Naive thymus-derived CD4-positive, alpha-beta T cell (primary cell): ENCODE measurements at regions of chr15 and their contacts with region 1.

Region 1: GRCh38 chr15:52568601-52569256 is at the start of gene ARPP19:
- DNase-seq: peak; percentile 58 to 81 (median 76)
- ATAC-seq: peak; percentile 83
- H3K4me3 ChIP-seq: peak within 1 kb of the TSS; percentile 75
- H3K4me3 Mint-ChIP-seq: peak within 1 kb of the TSS; percentile 89 to 100 (median 96)
- H3K27ac ChIP-seq: peak within 1 kb of the TSS; percentile 98
- H3K27ac Mint-ChIP-seq: peak within 1 kb of the TSS; percentile 95 to 100 (median 100)
- H3K4me1 ChIP-seq: peaks cover 13 to 25% of the 10 kb centered on the region in 2 donors
- H3K4me1 Mint-ChIP-seq: peaks cover 28 to 46% (median 42%) of the 10 kb centered on the region in 7 donors
- H3K27me3 ChIP-seq: no peaks in the 10 kb centered on the region
- H3K27me3 Mint-ChIP-seq: peaks cover 0 to 3% (median 0%) of the 10 kb centered on the region in 5 donors
- total RNA-seq, gene ARPP19: 94.9 to 148 (median 122) TPM

Region 2: GRCh38 chr15:52256366-52256765 is 312.4 kb before region 1 on chr15:
- CTCF ChIA-PET with region 1: no interaction called
- POLR2A ChIA-PET with region 1: no interaction called
- intact Hi-C with region 1: loop called (anchors 1 to 2 kb)
- DNase-seq: peak; percentile 27 to 80 (median 75)
- ATAC-seq: peak; percentile 98
- H3K4me3 ChIP-seq: peak overlapping the region; percentile 14
- H3K4me3 Mint-ChIP-seq: peak overlapping the region; percentile 49 to 85 (median 72)
- H3K27ac ChIP-seq: no peak overlapping the region
- H3K27ac Mint-ChIP-seq: peak overlapping the region; percentile 4 to 96 (median 65)
- H3K4me1 ChIP-seq: peaks cover 0 to 12% of the 10 kb centered on the region in 2 donors
- H3K4me1 Mint-ChIP-seq: peaks cover 5 to 55% (median 17%) of the 10 kb centered on the region in 7 donors
- H3K27me3 ChIP-seq: no peaks in the 10 kb centered on the region
- H3K27me3 Mint-ChIP-seq: no peaks in the 10 kb centered on the region

Region 3: DNA sequence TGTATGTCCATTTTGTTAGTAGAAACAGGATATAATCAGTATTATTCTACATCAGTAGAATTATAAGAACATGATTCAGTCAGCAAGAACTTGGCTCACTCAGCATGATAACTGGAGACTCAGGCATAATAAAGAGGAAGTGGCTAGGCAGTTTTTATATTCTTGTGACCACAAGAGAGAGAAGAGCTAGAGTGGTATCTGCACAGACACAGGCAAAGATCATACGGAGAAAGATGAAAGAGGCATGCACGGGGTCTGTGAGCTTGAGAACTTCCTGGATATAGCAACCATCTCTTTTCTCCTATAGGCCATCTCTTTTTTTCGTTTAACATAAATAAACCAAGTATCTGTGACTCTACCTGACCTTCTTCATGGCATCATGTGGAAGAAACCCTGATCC is 86.8 kb before region 1 on chr15:
- CTCF ChIA-PET with region 1: no interaction called
- POLR2A ChIA-PET with region 1: no interaction called
- intact Hi-C with region 1: loop called in 1 of 2 experiments (anchors 5 kb)
- DNase-seq: peak in 7 of 9 donors; percentile 75 to 91 (median 87)
- ATAC-seq: peak; percentile 99
- H3K4me3 ChIP-seq: peak overlapping the region; percentile 36
- H3K4me3 Mint-ChIP-seq: peak overlapping the region; percentile 8 to 78 (median 58)
- H3K27ac ChIP-seq: no peak overlapping the region
- H3K27ac Mint-ChIP-seq: peak overlapping the region; percentile 15 to 88 (median 53)
- H3K4me1 ChIP-seq: peaks cover 30 to 43% of the 10 kb centered on the region in 2 donors
- H3K4me1 Mint-ChIP-seq: peaks cover 56 to 71% (median 59%) of the 10 kb centered on the region in 7 donors
- H3K27me3 ChIP-seq: no peaks in the 10 kb centered on the region
- H3K27me3 Mint-ChIP-seq: no peaks in the 10 kb centered on the region

Region 4: DNA sequence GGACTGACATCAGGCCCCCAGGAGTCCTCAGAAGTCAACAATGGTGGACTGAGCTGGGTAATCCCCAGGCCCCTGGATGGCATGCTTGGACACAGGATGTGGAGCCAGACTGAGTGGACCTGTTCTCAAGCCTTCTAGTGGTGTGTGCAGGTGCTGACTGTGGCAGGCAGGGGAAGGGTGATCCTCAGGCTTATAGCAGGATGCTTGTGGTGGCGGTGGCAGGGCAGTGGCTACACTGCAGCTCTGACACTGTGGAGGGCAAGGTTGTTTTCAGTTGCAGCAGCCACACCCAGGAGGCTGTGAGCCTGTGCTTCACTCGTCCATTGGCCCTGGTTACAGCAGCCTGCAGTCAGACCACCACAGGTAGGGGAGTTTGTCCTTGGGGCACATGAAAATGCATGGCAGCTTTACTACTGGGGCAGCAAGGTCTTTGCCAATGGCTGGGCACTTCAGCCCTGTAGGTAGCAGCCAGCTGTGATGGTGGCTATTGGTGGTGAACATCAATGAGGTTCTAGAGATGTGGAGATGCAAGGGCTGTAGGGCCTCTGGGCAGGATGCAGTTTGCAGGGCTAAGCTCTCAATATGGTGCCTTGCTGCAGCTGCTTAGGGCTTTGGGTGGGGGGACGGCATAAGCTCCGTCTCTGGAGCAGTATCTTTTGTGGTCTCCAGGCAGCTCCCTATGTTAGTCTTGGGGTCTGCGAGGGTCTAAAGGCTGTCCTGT is 22.5 kb before region 1 on chr15:
- CTCF ChIA-PET with region 1: no interaction called
- POLR2A ChIA-PET with region 1: no interaction called
- intact Hi-C with region 1: no loop called
- DNase-seq: no peak
- ATAC-seq: peak; percentile 72
- H3K4me3 ChIP-seq: no peak overlapping the region
- H3K4me3 Mint-ChIP-seq: peak overlapping the region in 1 of 10 donors; percentile 28
- H3K27ac ChIP-seq: no peak overlapping the region
- H3K27ac Mint-ChIP-seq: peak overlapping the region in 3 of 9 donors; percentile 17 to 62 (median 38)
- H3K4me1 ChIP-seq: peaks cover 0 to 5% of the 10 kb centered on the region in 2 donors
- H3K4me1 Mint-ChIP-seq: peaks cover 0 to 14% (median 0%) of the 10 kb centered on the region in 7 donors
- H3K27me3 ChIP-seq: no peaks in the 10 kb centered on the region
- H3K27me3 Mint-ChIP-seq: peaks cover 0 to 6% (median 0%) of the 10 kb centered on the region in 5 donors

Region 5: DNA sequence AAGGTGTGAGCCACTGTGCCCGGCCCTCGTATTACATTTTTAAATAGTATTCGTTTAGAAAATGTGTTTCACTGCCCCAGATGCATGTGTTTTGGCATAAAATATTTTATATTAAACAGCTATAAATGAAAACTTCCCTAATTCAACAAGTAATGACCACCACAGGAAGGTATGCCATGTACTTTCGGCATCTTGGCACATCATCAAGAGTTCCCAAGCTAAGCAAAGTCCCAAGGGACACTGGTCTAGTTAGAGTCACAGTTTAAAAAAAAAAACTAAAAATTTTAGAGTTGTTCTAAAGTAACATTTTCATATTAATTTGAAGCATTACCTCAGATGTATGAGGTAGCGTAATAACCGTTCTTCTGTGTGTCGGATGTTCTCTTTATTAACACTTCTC is 15.7 kb after region 1 on chr15:
- CTCF ChIA-PET with region 1: no interaction called
- POLR2A ChIA-PET with region 1: no interaction called
- intact Hi-C with region 1: loop called in 1 of 2 experiments (anchors 2 kb)
- DNase-seq: no peak
- ATAC-seq: no peak
- H3K4me3 ChIP-seq: no peak overlapping the region
- H3K4me3 Mint-ChIP-seq: no peak overlapping the region
- H3K27ac ChIP-seq: no peak overlapping the region
- H3K27ac Mint-ChIP-seq: no peak overlapping the region
- H3K4me1 ChIP-seq: no peaks in the 10 kb centered on the region
- H3K4me1 Mint-ChIP-seq: peaks cover 0 to 1% (median 0%) of the 10 kb centered on the region in 7 donors
- H3K27me3 ChIP-seq: no peaks in the 10 kb centered on the region
- H3K27me3 Mint-ChIP-seq: no peaks in the 10 kb centered on the region

Region 6: DNA sequence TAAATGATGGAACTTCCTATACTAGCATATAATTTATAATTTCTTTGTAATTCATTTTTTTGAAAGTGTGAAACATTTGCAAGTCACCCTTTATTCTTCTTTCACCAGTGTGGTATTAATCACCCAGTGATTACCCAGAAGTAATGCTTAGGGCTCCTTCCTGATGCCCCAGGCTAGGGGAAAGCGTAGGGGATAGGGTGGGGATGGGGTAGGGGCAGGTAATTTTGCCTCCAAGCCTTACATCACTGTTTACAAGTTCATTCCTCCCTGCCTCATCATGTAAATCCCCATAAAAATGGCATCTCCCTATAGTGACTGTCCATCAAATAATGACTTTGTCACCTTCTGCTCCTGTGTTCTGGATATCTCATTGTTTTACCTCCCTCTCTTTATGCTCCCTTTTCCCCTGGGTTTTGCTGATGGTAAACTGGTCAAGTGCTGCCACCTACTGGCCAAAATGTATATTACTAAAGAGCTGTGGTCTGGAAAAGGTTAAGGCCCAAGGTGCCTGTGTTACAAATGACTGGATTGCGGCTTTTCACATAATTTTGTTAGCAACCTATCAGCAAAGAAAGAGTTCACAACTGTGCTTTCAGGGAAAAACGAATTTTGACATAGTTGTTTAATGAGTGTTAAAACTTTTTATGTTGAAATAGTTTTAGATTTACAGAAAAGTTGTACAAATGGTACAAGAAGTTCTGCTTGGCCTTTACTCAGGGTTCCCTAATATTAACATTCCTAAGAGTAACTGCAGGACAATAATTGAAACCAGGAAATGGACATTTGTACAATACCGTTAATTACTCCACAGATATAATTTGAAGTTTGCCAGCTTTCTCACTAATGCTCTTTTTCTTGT is 166.7 kb after region 1 on chr15:
- CTCF ChIA-PET with region 1: interaction called, 4 read pairs
- POLR2A ChIA-PET with region 1: no interaction called
- intact Hi-C with region 1: loop called (anchors 1 to 10 kb)
- DNase-seq: peak; percentile 22 to 83 (median 73)
- ATAC-seq: peak; percentile 90
- H3K4me3 ChIP-seq: no peak overlapping the region
- H3K4me3 Mint-ChIP-seq: no peak overlapping the region
- H3K27ac ChIP-seq: no peak overlapping the region
- H3K27ac Mint-ChIP-seq: peak overlapping the region in 3 of 9 donors; percentile 2 to 75 (median 55)
- H3K4me1 ChIP-seq: peaks cover under 1 to 4% of the 10 kb centered on the region in 2 donors
- H3K4me1 Mint-ChIP-seq: peaks cover 0 to 25% (median 7%) of the 10 kb centered on the region in 7 donors
- H3K27me3 ChIP-seq: no peaks in the 10 kb centered on the region
- H3K27me3 Mint-ChIP-seq: peaks cover 0 to 12% (median 3%) of the 10 kb centered on the region in 5 donors